Thyroid gland (tissue), 4 donors: ENCODE measurements at regions of chr19 and their contacts with region 1.

Region 1: DNA sequence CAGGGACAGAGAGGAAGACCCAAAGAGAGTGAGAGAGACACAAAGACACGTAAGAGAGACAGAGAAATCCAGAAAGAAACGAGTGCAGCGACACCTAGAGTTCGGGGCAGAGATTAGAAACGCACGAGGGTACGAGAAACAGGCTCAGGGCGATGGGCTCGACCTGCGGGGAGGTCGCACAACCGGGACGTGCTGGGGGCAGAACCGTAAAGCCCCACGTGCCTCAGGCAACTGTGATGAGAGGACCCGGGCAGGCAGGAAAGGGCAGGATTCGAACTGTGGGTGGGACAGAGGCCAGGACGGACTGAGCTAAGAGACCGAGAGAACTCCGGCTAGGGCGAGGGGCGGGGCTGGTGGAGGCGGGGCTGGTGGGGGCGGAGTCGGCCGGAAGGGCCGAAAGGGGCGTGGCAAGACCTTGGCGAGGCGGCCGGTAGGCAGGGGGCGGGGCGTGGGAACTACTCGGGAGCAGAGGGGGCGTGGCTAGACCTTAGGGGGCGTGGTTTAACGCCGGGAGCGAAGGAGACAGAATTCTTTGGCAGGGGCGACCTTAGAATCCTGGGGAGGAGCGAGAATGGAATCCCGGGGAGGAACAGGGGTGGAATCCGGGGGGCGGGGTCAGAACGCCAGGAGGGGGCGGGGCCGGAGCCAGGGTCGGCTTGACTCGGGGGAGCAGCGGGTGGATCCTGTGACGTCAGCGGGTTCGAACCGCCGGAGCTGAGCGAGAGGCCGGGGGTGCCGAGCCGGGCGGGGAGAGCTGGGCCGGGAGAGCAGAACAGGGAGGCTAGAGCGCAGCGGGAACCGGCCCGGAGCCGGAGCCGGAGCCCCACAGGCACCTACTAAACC is at the start of gene NECTIN2:
- DNase-seq: peak; percentile 100
- H3K4me3 ChIP-seq: peak within 1 kb of the TSS; percentile 42 to 85 (median 47)
- H3K27ac ChIP-seq: peak within 1 kb of the TSS; percentile 79 to 93 (median 92)
- H3K4me1 ChIP-seq: peaks cover 29 to 42% of the 10 kb centered on the region in 2 donors
- H3K27me3 ChIP-seq: no peaks in the 10 kb centered on the region
- CTCF ChIP-seq: peak in 5 of 6 experiments; percentile 25 to 76 (median 57)
- POLR2A ChIP-seq: peak; percentile 81 to 90
- total RNA-seq, gene NECTIN2: 88.6 to 164 (median 117) TPM

Region 2: DNA sequence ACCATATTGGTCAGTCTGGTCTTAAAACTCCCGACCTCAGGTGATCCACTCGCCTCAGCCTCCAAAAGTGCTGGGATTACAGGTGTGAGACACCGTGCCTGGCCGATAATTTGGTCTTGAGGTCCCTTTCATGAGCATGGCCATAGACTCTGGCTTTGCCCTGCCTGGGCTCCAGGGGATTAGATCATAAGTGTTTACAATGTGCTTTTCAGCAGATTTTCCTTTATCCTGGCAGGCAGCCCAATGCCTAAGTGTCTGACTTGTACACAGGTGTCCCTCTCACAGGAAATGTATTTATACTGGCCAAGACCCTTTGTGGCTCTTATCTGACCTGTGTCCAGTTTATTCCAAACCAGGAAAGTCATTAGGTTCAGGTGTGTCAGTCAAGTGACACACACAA is 21.1 kb before region 1 on chr19:
- intact Hi-C with region 1: no loop called
- DNase-seq: peak; percentile 74 to 75
- H3K4me3 ChIP-seq: no peak overlapping the region
- H3K27ac ChIP-seq: no peak overlapping the region
- H3K4me1 ChIP-seq: peaks cover 0 to 22% of the 10 kb centered on the region in 2 donors
- H3K27me3 ChIP-seq: no peaks in the 10 kb centered on the region
- CTCF ChIP-seq: no peak
- POLR2A ChIP-seq: no peak

Region 3: GRCh38 chr19:44889830-44890365 is 44.1 kb after region 1 on chr19:
- intact Hi-C with region 1: loop called (anchors 5 kb)
- DNase-seq: no peak
- H3K4me3 ChIP-seq: peak overlapping the region in 1 of 3 donors; percentile 20
- H3K27ac ChIP-seq: peak overlapping the region in 1 of 3 donors; percentile 85
- H3K4me1 ChIP-seq: peaks cover 13 to 18% of the 10 kb centered on the region in 2 donors
- H3K27me3 ChIP-seq: no peaks in the 10 kb centered on the region
- CTCF ChIP-seq: no peak
- POLR2A ChIP-seq: no peak